ENCODE measurements at regions of chr1 and their contacts with region 1.

Region 1: GRCh38 chr1:7207875-7208646 is 422.8 kb downstream of the CAMTA1 start:
- DNase-seq: peak; percentile 59 to 86
- H3K4me3 ChIP-seq: no peak overlapping the region
- H3K27ac ChIP-seq: no peak overlapping the region
- H3K4me1 ChIP-seq: peaks cover 0 to 2% (median 0%) of the 10 kb centered on the region in 4 experiments; a peak in 1 of 7 replicates
- H3K27me3 ChIP-seq: no peaks in the 10 kb centered on the region
- CTCF ChIP-seq: peak; percentile 95 to 99 (median 97)
- EP300 ChIP-seq: no peak
- POLR2A ChIP-seq: no peak
- RAD21 ChIP-seq: peak; percentile 99

Region 2: DNA sequence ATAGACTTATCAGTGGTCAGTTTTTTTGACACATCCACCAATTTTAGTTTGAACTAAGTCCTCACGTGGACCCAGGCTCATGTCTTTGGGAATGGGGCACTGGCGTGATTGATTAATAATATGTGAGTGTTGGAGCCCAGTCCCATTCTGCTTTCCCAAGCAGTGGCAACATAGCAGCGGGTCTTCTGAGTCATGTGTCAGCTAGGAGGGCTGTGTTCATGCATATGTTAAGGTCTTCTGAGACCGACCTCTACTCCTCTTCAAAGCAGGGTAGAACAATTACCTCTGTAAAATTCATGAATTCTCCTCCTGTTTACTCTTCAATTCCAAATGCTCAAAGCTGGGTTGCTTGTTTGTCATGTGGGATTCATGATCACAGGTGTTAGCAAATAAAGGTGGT is 131.5 kb before region 1 on chr1:
- CTCF ChIA-PET with region 1: interaction called, 26 read pairs
- POLR2A ChIA-PET with region 1: no interaction called
- DNase-seq: no peak
- H3K4me3 ChIP-seq: no peak overlapping the region
- H3K27ac ChIP-seq: no peak overlapping the region
- H3K4me1 ChIP-seq: no peaks in the 10 kb centered on the region
- H3K27me3 ChIP-seq: peaks cover 0 to 3% (median 1%) of the 10 kb centered on the region in 4 experiments; a peak in 1 of 7 replicates
- CTCF ChIP-seq: no peak
- EP300 ChIP-seq: no peak
- POLR2A ChIP-seq: no peak
- RAD21 ChIP-seq: no peak

Region 3: DNA sequence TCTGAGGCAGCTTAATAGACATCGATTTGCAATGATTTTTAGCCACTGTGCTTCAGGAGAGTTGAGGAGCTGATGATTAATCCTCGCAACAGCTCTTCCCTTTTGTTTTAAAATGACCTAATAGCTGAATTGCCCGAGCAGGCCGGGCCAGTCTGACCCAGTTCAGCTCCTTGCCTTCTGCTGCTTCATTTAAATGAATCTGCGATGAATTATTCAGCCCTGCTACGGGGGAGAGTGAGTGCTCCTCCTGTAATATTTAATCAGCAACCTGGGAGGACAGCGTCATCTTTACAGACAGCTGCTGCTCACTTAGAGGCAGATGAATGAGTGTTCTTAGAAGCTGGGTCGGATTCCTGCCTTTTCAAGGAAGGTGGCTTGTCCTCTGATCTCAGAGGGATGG is 97.7 kb before region 1 on chr1:
- CTCF ChIA-PET with region 1: interaction called, 14 read pairs
- POLR2A ChIA-PET with region 1: no interaction called
- DNase-seq: no peak
- H3K4me3 ChIP-seq: no peak overlapping the region
- H3K27ac ChIP-seq: no peak overlapping the region
- H3K4me1 ChIP-seq: peaks cover 0 to 4% (median 0%) of the 10 kb centered on the region in 4 experiments; a peak in 1 of 7 replicates
- H3K27me3 ChIP-seq: no peaks in the 10 kb centered on the region
- CTCF ChIP-seq: no peak
- EP300 ChIP-seq: no peak
- POLR2A ChIP-seq: no peak
- RAD21 ChIP-seq: no peak

Region 4: DNA sequence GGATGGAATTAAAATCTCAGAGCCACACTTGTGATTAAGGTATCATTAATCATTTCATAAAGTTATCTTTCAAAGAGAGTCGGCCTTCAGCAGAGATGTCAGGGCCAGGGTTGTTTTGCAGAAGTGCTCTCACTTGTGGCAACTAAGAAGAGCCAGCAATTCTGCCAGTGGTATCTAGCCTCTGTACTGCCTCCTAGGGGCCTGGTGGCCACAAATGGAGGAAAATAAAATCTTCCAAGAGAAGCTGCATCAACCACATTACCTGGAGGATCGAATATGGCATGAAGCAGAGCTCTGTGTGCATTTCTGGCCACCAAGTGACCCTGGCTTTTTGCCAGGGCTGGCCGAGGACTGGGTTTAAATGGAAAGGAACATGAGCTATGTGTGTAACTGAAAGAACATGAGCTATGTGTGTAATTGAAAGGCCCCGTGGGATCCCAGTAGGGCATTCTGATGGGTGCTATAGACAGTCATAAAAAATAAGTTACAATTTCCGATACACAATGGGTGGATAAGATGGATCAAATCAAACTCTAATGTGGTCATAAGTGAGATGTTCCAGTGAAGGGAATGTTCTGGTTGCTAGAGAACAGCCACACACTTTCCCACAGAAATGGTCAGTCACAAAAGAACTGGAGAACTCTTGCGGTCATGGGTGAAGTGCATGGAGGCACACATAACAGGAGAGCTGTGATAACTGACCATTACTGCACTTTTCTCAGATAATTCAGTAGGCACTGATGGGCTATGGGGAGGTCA is 87.0 kb before region 1 on chr1:
- CTCF ChIA-PET with region 1: interaction called, 14 read pairs
- POLR2A ChIA-PET with region 1: no interaction called
- DNase-seq: no peak
- H3K4me3 ChIP-seq: no peak overlapping the region
- H3K27ac ChIP-seq: no peak overlapping the region
- H3K4me1 ChIP-seq: peaks cover 0 to 4% (median 3%) of the 10 kb centered on the region in 4 experiments; a peak in 5 of 7 replicates
- H3K27me3 ChIP-seq: no peaks in the 10 kb centered on the region
- CTCF ChIP-seq: peak in 2 of 3 experiments; percentile 58 to 63; a peak in 3 of 4 replicates
- EP300 ChIP-seq: no peak
- POLR2A ChIP-seq: no peak
- RAD21 ChIP-seq: peak; percentile 34 to 57

Region 5: GRCh38 chr1:7255303-7256058 is 47.4 kb after region 1 on chr1:
- CTCF ChIA-PET with region 1: no interaction called
- POLR2A ChIA-PET with region 1: no interaction called
- DNase-seq: no peak
- H3K4me3 ChIP-seq: no peak overlapping the region
- H3K27ac ChIP-seq: no peak overlapping the region
- H3K4me1 ChIP-seq: peaks cover 0 to 11% (median 6%) of the 10 kb centered on the region in 4 experiments; a peak in 4 of 7 replicates
- H3K27me3 ChIP-seq: no peaks in the 10 kb centered on the region
- CTCF ChIP-seq: no peak
- EP300 ChIP-seq: no peak
- POLR2A ChIP-seq: no peak
- RAD21 ChIP-seq: no peak

Measured in H1 (cell line).